ENCODE measurements at regions of chr1 and their contacts with region 1.

Region 1: DNA sequence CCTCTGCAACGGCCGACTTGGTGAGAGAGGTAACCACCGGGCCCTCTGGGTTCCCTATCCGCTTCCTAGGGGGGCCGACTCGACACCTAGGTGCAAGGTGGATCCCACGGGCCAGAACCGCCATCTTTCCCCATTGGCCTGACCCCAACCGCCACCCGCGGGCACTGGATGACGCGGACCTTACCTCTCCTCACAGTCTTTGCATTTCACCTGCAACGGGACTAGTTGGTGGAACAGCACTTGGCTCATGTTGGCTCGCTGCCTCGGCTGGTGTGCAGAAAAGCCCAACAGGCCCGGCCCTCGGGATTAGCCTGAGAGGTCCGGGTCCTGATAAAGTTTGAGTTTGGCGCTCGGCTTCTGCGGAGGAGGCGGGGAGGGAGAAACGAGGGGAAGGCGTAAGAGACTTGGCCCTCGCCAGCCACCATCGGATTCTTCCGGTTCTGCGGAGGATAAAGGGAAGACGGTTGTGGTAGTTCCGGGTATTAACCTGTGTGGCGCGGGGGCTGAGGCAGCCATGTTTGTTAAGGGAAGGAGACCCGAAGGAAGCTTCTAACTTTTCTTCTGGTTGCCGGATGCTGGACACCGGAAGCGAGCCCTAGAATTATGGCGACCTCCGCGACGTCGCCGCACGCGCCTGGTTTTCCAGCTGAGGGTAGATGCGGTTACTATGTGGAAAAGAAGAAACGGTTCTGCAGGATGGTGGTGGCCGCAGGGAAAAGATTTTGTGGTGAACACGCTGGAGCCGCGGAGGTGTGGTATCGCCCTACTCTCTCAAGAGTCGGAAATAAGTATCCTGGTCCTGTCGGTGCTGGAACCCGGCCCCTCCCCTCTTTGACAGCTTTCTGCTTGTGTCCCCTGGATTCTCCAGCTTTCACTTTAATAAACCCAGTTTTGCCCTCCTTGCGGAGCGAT is at the starts of genes SASS6 and TRMT13:
- DNase-seq: peak; percentile 94 to 98
- ATAC-seq: peak; percentile 99 to 100 (median 100)
- H3K4me3 ChIP-seq: peak within 1 kb of the TSS; percentile 65 to 93 (median 82)
- H3K27ac ChIP-seq: peak within 1 kb of the TSS in 9 of 10 donors; percentile 59 to 86 (median 76)
- H3K4me1 ChIP-seq: peaks cover 5 to 41% (median 27%) of the 10 kb centered on the region in 9 donors
- H3K27me3 ChIP-seq: no peaks in the 10 kb centered on the region
- CTCF ChIP-seq: peak in 1 of 9 donors; percentile 17
- total RNA-seq, gene SASS6: 0.95 to 2.7 (median 1.7) TPM
- total RNA-seq, gene TRMT13: 4.1 to 8.2 (median 5.4) TPM

Region 2: DNA sequence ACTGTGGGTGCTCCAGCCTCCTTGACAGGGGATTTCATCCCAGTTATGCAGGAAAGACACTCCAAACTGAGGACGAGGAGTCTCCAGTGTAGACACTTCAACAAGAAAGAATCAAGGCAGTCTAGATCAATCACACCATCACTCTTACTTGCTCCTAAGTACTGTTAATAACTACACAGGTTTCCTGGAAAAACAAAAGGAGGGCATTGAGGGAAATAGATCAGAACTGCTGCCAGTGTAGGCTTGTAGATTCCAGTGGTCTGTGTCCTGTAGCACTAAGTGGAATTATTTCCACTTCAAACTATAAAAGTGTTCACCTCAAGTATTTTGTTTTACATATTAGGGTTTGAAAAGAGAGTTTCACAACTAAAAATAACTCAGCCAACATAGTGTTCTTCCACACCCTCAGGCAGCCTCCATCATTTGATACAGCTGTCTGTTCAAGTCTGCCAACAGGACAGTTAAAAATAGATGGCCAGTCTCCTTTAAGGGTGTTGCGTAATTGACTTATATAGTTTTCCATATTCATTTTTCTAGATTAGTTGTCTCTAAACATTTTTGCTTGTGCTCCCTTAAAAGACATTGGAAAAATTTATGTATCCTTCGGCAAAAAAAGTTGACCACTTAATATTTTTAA is 314.6 kb before region 1 on chr1:
- intact Hi-C with region 1: loop called in 1 of 10 experiments (anchors 10 kb)
- DNase-seq: peak in 1 of 2 donors; percentile 9
- ATAC-seq: peak; percentile 34 to 94 (median 84)
- H3K4me3 ChIP-seq: no peak overlapping the region
- H3K27ac ChIP-seq: peak overlapping the region in 4 of 10 donors; percentile 45 to 63 (median 56)
- H3K4me1 ChIP-seq: peaks cover 0 to 8% (median 0%) of the 10 kb centered on the region in 9 donors
- H3K27me3 ChIP-seq: peaks cover 0 to 5% (median 0%) of the 10 kb centered on the region in 7 donors
- CTCF ChIP-seq: no peak

Region 3: GRCh38 chr1:99906535-99906934 is 226.3 kb before region 1 on chr1:
- intact Hi-C with region 1: loop called in 1 of 10 experiments (anchors 10 kb)
- DNase-seq: no peak
- ATAC-seq: no peak
- H3K4me3 ChIP-seq: no peak overlapping the region
- H3K27ac ChIP-seq: no peak overlapping the region
- H3K4me1 ChIP-seq: no peaks in the 10 kb centered on the region
- H3K27me3 ChIP-seq: no peaks in the 10 kb centered on the region
- CTCF ChIP-seq: no peak

Region 4: DNA sequence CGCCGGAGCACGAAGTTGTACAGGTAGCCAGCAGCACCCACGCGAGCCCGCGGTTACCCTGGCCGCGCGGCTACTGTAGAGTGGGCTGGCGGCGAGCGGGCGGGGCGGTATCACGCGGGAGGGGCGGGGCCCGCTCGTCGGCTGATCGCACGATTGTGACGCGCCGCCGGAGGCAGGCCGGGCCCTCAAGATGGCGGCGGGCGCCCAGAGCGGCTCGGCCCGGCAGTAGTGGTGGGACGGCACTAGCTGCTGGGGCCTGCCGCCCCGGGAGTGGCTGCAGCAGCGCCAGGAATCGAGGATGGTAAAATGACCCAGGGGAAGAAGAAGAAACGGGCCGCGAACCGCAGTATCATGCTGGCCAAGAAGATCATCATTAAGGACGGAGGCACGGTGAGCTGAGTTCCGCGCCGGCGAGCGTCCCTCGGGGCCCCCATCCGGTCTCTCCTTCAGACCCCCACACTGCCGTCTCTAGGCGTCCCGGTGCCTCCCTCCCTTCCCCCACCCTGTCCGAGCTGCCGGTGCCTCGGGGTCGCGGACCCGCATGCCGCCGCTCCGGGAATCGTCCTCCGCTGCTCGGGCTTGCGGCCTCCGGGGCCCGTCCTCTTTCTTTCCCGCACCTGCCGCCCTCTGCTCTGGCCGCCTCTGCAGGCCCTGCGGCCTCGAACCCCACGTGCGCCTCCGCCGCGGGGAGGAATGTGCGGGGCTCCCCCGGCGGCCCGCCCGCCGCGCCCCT is 94.7 kb before region 1 on chr1:
- intact Hi-C with region 1: loop called in 2 of 10 experiments (anchors 5 kb)
- DNase-seq: peak; percentile 89 to 90
- ATAC-seq: peak; percentile 99 to 100 (median 99)
- H3K4me3 ChIP-seq: peak overlapping the region; percentile 74 to 94 (median 86)
- H3K27ac ChIP-seq: peak overlapping the region; percentile 91 to 98 (median 96)
- H3K4me1 ChIP-seq: peaks cover 0 to 57% (median 32%) of the 10 kb centered on the region in 9 donors
- H3K27me3 ChIP-seq: no peaks in the 10 kb centered on the region
- CTCF ChIP-seq: no peak

Region 5: DNA sequence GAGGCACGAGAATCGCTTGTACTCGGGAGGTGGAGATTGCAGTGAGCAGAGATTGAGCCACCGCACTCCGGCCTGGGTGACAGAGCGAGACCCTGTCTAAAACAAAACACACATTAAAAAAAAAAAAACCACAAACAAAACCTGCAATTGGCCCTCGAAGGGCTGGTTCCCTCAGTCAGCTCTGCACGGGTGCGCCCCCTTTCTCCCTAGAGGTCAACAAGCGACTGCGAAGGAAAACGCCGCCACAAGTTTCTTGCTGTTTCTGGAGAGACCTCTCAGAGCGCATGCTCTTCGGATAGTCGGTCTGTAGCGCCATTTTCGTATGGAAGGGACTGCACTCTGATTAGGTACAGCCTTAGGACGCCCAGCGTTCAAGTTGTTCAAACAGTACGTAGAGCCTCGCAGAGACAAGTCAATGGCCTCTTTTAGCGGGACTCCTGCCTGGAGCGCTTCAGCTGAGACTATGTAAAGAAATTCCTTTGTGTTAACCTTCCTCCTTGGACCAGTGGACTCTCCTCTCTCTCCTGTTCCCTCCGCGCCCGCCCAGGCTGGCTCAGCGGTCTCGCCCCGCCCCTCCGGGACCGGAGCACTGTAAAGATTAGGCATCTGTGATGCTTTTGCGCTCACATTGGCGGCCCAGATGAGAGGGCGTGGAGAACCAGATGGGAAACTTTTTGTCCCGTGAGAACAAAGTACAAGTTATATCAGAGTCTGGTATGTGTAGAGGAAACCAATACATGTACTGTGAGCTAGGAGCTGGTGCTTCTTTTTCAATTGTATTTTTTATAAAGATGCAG is 218.5 kb after region 1 on chr1:
- intact Hi-C with region 1: loop called in 1 of 10 experiments (anchors 10 kb)
- DNase-seq: peak; percentile 86 to 87
- ATAC-seq: peak; percentile 63 to 88 (median 83)
- H3K4me3 ChIP-seq: peak overlapping the region; percentile 67 to 97 (median 90)
- H3K27ac ChIP-seq: peak overlapping the region; percentile 57 to 95 (median 89)
- H3K4me1 ChIP-seq: peaks cover 3 to 36% (median 32%) of the 10 kb centered on the region in 9 donors
- H3K27me3 ChIP-seq: no peaks in the 10 kb centered on the region
- CTCF ChIP-seq: peak in 7 of 9 donors; percentile 33 to 63 (median 45)